ENCODE measurements at regions of chr2 and their contacts with region 1.

Region 1: GRCh38 chr2:213251618-213252017 is 32.6 kb upstream of the SPAG16 start:
- DNase-seq: peak in 4 of 5 donors; percentile 42 to 49 (median 46)
- H3K4me3 ChIP-seq: no peak overlapping the region
- H3K4me3 Mint-ChIP-seq: no peak overlapping the region
- H3K27ac ChIP-seq: no peak overlapping the region
- H3K27ac Mint-ChIP-seq: no peak overlapping the region
- H3K4me1 ChIP-seq: no peaks in the 10 kb centered on the region
- H3K4me1 Mint-ChIP-seq: no peaks in the 10 kb centered on the region
- H3K27me3 ChIP-seq: no peaks in the 10 kb centered on the region
- H3K27me3 Mint-ChIP-seq: peaks cover 4 to 9% of the 10 kb centered on the region in 2 donors

Region 2: DNA sequence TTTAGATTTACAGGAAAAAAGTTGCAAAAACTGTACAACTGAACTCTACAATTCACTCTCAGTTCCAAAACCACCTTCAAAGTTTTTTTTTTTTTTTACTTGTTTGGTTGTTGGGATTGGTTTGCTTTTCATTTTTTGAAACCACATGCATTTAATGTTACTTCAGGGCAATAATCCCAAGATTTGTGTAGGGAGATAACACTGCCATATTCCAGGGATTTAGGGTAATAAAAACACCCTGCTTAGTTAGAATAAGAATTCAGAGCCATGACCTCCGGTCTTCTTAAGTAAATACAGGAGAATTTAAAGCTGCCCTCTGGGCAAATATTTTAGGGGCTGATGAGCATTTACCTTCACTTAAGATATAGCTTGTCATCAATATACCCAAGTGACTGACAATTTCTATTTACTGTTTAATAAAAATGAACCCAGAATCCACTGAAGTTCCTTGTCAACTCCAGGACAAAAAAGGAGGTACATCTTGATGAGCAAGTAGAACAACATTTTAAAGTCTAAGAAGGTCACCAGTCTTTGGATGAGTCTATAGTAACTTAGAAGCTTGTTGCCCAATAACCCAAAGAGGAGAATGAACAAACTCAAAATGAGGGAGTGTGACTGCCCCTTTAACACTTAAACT is 76.0 kb before region 1 on chr2:
- CTCF ChIA-PET with region 1: no interaction called
- POLR2A ChIA-PET with region 1: no interaction called
- intact Hi-C with region 1: no loop called
- DNase-seq: no peak
- H3K4me3 ChIP-seq: no peak overlapping the region
- H3K4me3 Mint-ChIP-seq: no peak overlapping the region
- H3K27ac ChIP-seq: no peak overlapping the region
- H3K27ac Mint-ChIP-seq: no peak overlapping the region
- H3K4me1 ChIP-seq: no peaks in the 10 kb centered on the region
- H3K4me1 Mint-ChIP-seq: no peaks in the 10 kb centered on the region
- H3K27me3 ChIP-seq: no peaks in the 10 kb centered on the region
- H3K27me3 Mint-ChIP-seq: peaks cover 0 to 2% of the 10 kb centered on the region in 2 donors

Region 3: GRCh38 chr2:213934560-213934959 is 682.9 kb after region 1 on chr2:
- CTCF ChIA-PET with region 1: interaction called, 37 read pairs
- POLR2A ChIA-PET with region 1: no interaction called
- intact Hi-C with region 1: no loop called
- DNase-seq: peak in 4 of 5 donors; percentile 8 to 14 (median 11)
- H3K4me3 ChIP-seq: no peak overlapping the region
- H3K4me3 Mint-ChIP-seq: no peak overlapping the region
- H3K27ac ChIP-seq: no peak overlapping the region
- H3K27ac Mint-ChIP-seq: no peak overlapping the region
- H3K4me1 ChIP-seq: no peaks in the 10 kb centered on the region
- H3K4me1 Mint-ChIP-seq: no peaks in the 10 kb centered on the region
- H3K27me3 ChIP-seq: no peaks in the 10 kb centered on the region
- H3K27me3 Mint-ChIP-seq: no peaks in the 10 kb centered on the region

Region 4: GRCh38 chr2:214830794-214831346 is 1579.3 kb after region 1 on chr2:
- CTCF ChIA-PET with region 1: interaction called, 3 read pairs
- POLR2A ChIA-PET with region 1: no interaction called
- intact Hi-C with region 1: loop called (anchors 2 kb)
- DNase-seq: peak in 1 of 5 donors; percentile 7
- H3K4me3 ChIP-seq: no peak overlapping the region
- H3K4me3 Mint-ChIP-seq: no peak overlapping the region
- H3K27ac ChIP-seq: no peak overlapping the region
- H3K27ac Mint-ChIP-seq: no peak overlapping the region
- H3K4me1 ChIP-seq: no peaks in the 10 kb centered on the region
- H3K4me1 Mint-ChIP-seq: no peaks in the 10 kb centered on the region
- H3K27me3 ChIP-seq: no peaks in the 10 kb centered on the region
- H3K27me3 Mint-ChIP-seq: peaks cover 0 to 2% of the 10 kb centered on the region in 2 donors

Region 5: DNA sequence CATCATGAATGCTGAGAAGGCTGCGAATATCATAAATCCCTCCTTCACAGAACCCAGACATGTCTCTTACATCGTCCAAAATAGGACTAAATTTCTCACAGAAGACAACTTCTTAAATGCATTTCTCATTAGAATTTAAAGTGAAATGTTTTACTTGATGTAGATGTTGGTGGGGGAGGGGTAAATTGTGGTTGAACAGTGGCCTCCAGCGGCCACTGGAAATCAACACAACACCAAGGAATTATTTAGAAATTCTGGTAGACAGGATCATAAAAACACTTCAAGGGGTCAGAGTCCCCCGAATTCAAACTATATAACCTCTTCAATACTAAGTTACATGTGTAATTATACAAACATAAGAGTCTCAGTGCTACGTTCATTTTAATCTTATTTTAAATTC is 1750.9 kb after region 1 on chr2:
- CTCF ChIA-PET with region 1: no interaction called
- POLR2A ChIA-PET with region 1: no interaction called
- intact Hi-C with region 1: loop called (anchors 10 kb)
- DNase-seq: peak in 1 of 5 donors; percentile 6
- H3K4me3 ChIP-seq: no peak overlapping the region
- H3K4me3 Mint-ChIP-seq: no peak overlapping the region
- H3K27ac ChIP-seq: no peak overlapping the region
- H3K27ac Mint-ChIP-seq: no peak overlapping the region
- H3K4me1 ChIP-seq: no peaks in the 10 kb centered on the region
- H3K4me1 Mint-ChIP-seq: no peaks in the 10 kb centered on the region
- H3K27me3 ChIP-seq: no peaks in the 10 kb centered on the region
- H3K27me3 Mint-ChIP-seq: peaks cover 3 to 10% of the 10 kb centered on the region in 2 donors